Activated T-helper 2 cell treated with anti-CD3 and anti-CD28 coated beads, Interferon-gamma antibody, Interleukin-2, Interleukin-4, amounts not matched to agents 10 μg/mL and 5 μg/mL and 100 μg/mL, durations not matched to agents 14 hours and 24 hours and 36 hours (primary cell): ENCODE measurements at regions of chr10 and their contacts with region 1.

Region 1: GRCh38 chr10:48289501-48290238 is 15.2 kb upstream of the FRMPD2 start:
- DNase-seq: peak; percentile 29
- H3K4me3 Mint-ChIP-seq: no peak overlapping the region
- H3K27ac Mint-ChIP-seq: no peak overlapping the region
- H3K4me1 Mint-ChIP-seq: peaks cover 41% of the 10 kb centered on the region
- H3K27me3 Mint-ChIP-seq: no peaks in the 10 kb centered on the region

Region 2: GRCh38 chr10:48215488-48216204 is 74.0 kb before region 1 on chr10:
- intact Hi-C with region 1: loop called (anchors 2 kb)
- DNase-seq: peak; percentile 30
- H3K4me3 Mint-ChIP-seq: no peak overlapping the region
- H3K27ac Mint-ChIP-seq: no peak overlapping the region
- H3K4me1 Mint-ChIP-seq: no peaks in the 10 kb centered on the region
- H3K27me3 Mint-ChIP-seq: peaks cover 10% of the 10 kb centered on the region

Region 3: GRCh38 chr10:48231699-48232315 is 57.9 kb before region 1 on chr10:
- intact Hi-C with region 1: loop called (anchors 5 kb)
- DNase-seq: no peak
- H3K4me3 Mint-ChIP-seq: no peak overlapping the region
- H3K27ac Mint-ChIP-seq: no peak overlapping the region
- H3K4me1 Mint-ChIP-seq: peaks cover 14% of the 10 kb centered on the region
- H3K27me3 Mint-ChIP-seq: peaks cover 10% of the 10 kb centered on the region

Region 4: GRCh38 chr10:48266528-48266927 is 23.1 kb before region 1 on chr10:
- intact Hi-C with region 1: loop called (anchors 2 kb)
- DNase-seq: no peak
- H3K4me3 Mint-ChIP-seq: no peak overlapping the region
- H3K27ac Mint-ChIP-seq: peak overlapping the region; percentile 20
- H3K4me1 Mint-ChIP-seq: peaks cover 10% of the 10 kb centered on the region
- H3K27me3 Mint-ChIP-seq: peaks cover 11% of the 10 kb centered on the region